ENCODE measurements at regions of chr12 and their contacts with region 1.

Region 1: GRCh38 chr12:110056147-110056484 is 7.8 kb upstream of the C12orf76 start:
- DNase-seq: no peak
- H3K4me3 Mint-ChIP-seq: no peak overlapping the region
- H3K27ac Mint-ChIP-seq: peak overlapping the region; percentile 95
- H3K4me1 Mint-ChIP-seq: peaks cover 50% of the 10 kb centered on the region
- H3K27me3 Mint-ChIP-seq: no peaks in the 10 kb centered on the region

Region 2: GRCh38 chr12:109982210-109982609 is 73.9 kb before region 1 on chr12:
- intact Hi-C with region 1: loop called (anchors 1 kb)
- DNase-seq: no peak
- H3K4me3 Mint-ChIP-seq: peak overlapping the region; percentile 9
- H3K27ac Mint-ChIP-seq: peak overlapping the region; percentile 87
- H3K4me1 Mint-ChIP-seq: peaks cover 53% of the 10 kb centered on the region
- H3K27me3 Mint-ChIP-seq: no peaks in the 10 kb centered on the region

Region 3: DNA sequence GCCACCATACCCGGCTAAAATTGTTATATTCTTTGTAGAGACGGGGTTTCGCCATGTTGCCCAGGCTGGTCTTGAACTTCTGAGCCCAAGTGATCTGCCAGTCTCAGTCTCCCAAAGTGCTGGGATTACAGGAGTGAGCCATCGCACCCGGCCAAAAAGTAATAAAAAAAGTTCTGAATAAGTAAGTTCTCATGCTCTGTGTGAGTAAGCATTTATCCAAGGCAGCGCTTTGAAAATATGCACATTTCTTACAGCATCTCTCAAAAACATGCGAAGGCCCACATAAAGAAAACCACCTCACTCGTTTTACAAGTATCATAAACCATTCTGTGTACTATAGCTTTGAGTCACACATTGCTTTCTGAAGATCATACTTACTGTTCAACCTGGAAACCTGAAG is 68.5 kb before region 1 on chr12:
- intact Hi-C with region 1: loop called (anchors 1 kb)
- DNase-seq: no peak
- H3K4me3 Mint-ChIP-seq: no peak overlapping the region
- H3K27ac Mint-ChIP-seq: peak overlapping the region; percentile 79
- H3K4me1 Mint-ChIP-seq: peaks cover 38% of the 10 kb centered on the region
- H3K27me3 Mint-ChIP-seq: no peaks in the 10 kb centered on the region